HEK293 (cell line): ENCODE measurements at regions of chr21 and their contacts with region 1.

Region 1: DNA sequence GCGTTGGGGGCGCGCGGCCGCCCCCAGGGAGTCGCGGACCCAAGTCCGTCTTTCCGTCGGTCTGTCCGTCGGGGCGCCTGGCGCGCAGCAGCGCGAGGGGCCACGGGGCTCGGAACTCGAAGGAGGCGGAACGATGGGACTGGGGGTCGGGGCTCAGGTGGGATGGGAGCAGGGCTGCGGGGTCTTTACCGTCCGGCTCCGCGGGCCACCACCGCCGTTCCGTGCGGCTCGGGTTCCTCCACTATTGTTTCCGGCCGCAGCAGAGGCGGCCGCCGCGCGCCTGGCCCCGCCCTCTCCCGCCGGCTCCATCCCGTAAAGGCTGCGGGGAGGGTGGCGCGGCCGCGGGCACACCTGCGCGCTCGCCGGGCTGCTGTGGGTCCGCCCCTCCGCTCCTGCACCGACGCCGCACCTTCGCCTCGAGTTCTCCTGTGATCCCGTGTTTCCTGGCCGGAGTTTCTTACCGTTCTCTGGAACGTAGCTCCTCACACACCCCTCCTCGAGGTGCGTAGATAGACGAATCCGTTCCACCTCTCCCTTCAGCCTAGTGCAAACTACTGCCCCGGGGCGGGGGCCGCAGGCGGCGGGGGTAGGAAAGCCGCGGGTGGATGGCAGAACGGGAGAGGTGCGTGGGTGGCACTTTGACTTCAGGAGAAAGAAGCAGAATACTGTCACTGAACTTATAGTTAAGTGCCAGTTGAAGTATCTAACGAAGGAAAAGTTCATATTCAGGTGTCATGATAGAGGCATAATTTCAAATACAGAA is at the start of gene C21orf91:
- H3K4me3 ChIP-seq: peak within 1 kb of the TSS; percentile 98
- H3K27ac ChIP-seq: peak within 1 kb of the TSS; percentile 98
- H3K4me1 ChIP-seq: peaks cover 8% of the 10 kb centered on the region; the same call in 1 of the 2 replicates
- CTCF ChIP-seq: no peak

Region 2: DNA sequence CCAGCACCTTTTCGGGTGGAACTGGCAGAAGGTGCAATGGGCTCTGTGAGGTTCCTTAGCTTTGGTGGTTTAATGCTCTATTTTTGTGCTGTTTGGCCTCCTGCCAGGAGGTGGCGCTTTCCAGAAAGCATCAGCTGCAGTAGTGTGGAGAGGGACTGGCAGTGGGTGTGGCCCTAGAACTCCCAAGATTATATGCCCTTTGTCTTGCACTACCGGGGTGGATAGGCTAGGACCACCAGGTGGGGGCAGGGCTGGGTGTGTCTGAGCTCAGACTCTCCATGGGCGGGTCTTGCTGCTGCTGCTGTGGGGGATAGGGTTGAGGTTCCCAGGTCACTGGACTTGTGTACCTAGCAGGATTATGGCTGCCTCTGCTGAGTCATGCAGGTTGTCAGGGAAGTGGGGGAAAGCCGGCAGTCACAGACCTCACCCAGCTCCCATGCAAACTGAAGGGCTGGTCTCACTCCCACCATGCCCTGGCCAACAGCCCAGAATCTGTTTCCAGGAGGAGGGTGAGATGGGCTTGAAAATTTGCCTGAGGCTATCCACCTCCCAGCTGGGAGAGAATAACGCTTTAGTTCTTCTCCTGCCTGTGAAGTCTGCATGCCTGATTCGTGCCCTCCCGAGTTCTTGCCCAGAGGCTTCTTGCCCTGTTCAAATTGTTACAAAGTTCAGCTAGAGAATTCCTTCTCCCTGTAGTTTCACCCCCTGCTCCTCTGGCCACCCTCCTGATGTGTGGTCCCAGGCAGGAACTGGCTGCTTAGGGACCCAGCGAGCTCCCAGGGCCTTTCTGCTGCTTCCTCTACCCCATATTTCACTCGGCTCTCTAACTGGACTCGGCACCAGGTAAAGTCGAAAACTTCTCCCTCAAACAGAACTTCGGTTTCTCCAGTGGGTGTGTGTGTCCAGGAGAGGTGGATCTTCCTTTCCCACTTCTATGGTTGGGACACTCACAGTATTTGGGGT is 130.1 kb before region 1 on chr21:
- CTCF ChIA-PET with region 1: interaction called, 5 read pairs
- POLR2A ChIA-PET with region 1: interaction called, 10 read pairs
- H3K4me3 ChIP-seq: peak overlapping the region; percentile 18; the same call in 1 of the 2 replicates
- H3K27ac ChIP-seq: peak overlapping the region; percentile 12; the same call in 1 of the 2 replicates
- H3K4me1 ChIP-seq: no peaks in the 10 kb centered on the region
- CTCF ChIP-seq: no peak